ENCODE measurements at regions of chr3 and their contacts with region 1.

Region 1: DNA sequence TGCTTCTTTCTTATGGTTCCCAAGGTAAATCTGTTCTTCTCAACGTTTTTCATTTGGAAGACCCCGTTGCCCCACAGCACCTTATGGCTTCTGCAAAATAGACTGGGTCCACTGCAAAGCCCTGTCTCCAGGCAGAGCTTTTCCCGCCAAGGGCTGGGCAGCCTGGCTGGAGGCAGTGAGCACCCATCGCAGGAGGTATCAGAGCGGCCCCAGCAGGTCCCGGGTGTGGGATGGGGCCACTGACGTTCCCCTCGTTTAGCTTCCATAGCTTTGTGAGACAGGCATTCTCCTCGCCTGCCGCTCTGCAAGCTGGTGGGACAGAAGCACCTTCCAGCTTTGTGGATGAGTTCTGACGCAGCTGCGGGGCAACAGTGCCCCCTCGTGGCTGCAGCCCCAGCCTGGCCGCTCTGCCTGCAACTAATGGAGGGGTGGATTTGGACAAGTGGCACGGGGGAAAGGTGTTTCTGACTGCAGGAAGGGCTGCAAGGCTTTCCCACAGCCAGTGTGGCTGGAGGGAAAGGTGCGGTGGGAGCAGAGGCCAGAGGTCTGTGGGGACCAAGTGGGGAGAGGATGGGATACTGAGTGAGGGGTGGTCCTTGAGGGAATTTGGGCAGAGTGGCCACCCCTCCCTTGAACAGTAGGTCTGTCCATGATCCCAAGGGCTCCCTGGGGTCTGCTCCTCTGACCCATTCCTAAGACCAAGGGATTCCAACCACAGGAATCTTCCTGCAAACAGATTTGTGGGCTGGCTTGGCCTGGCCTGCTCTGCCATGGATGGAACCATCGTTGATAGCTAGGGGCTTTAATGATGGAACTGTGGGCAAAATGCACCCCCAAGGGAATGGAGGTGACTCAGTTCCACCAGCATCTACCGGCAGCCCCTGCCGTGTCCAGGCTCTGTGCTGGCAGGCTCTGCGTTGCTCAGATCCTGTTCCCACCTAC is 99.4 kb downstream of the FBLN2 start:
- DNase-seq: no peak
- H3K4me3 ChIP-seq: no peak overlapping the region
- CTCF ChIP-seq: peak; percentile 99

Region 2: GRCh38 chr3:13091898-13092611 is 556.3 kb before region 1 on chr3:
- CTCF ChIA-PET with region 1: interaction called, 73 read pairs
- POLR2A ChIA-PET with region 1: no interaction called
- DNase-seq: no peak
- H3K4me3 ChIP-seq: no peak overlapping the region
- CTCF ChIP-seq: peak; percentile 83

Region 3: GRCh38 chr3:13461169-13462158 is 186.9 kb before region 1 on chr3:
- CTCF ChIA-PET with region 1: interaction called, 15 read pairs
- POLR2A ChIA-PET with region 1: no interaction called
- DNase-seq: no peak
- H3K4me3 ChIP-seq: no peak overlapping the region
- CTCF ChIP-seq: peak; percentile 70

Region 4: GRCh38 chr3:13495921-13496723 is 152.2 kb before region 1 on chr3:
- CTCF ChIA-PET with region 1: interaction called, 1,252 read pairs
- POLR2A ChIA-PET with region 1: interaction called, 8 read pairs
- DNase-seq: peak; percentile 21
- H3K4me3 ChIP-seq: no peak overlapping the region
- CTCF ChIP-seq: peak; percentile 95

Region 5: DNA sequence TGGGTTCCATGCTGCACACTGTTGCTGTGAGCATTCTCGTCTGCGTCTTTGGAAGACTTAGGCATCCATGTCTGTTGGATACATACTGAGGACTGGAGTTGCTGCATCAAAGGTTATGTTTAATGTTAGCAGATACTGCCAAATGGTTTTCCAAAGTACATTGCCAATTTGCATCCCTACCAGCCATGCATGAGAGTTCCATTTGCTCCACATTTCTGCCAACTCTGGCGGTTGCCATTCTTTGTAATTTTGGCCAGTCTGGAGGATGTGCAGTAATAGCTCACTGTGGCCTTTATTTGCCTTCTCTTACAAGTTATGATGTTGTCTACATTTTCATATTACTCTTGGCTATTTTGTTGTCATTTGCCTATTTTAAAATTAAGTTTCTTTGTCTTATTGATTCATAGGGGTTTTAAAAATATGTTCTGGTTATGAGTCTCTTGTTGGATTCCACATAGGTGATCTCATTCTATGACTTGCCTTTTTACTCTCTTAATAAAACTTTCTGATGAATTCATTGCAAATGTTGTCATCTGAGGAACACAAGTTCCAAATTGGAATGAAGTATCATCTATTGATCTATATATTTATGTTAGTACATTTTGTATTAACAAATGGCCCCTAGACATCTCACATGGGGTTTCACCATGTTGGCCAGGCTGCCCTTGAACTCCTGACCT is 57.4 kb before region 1 on chr3:
- CTCF ChIA-PET with region 1: interaction called, 10 read pairs
- POLR2A ChIA-PET with region 1: no interaction called
- DNase-seq: no peak
- H3K4me3 ChIP-seq: no peak overlapping the region
- CTCF ChIP-seq: no peak